Body of pancreas (tissue), 4 donors: ENCODE measurements at regions of chr5 and their contacts with region 1.

Region 1: GRCh38 chr5:16446993-16447392 is 18.6 kb downstream of the ZNF622 start:
- DNase-seq: no peak
- ATAC-seq: no peak
- H3K4me3 ChIP-seq: no peak overlapping the region
- H3K27ac ChIP-seq: no peak overlapping the region
- H3K4me1 ChIP-seq: no peaks in the 10 kb centered on the region
- H3K27me3 ChIP-seq: no peaks in the 10 kb centered on the region
- CTCF ChIP-seq: no peak
- POLR2A ChIP-seq: no peak

Region 2: GRCh38 chr5:16178745-16179372 is 268.1 kb before region 1 on chr5:
- intact Hi-C with region 1: loop called (anchors 10 kb)
- DNase-seq: peak; percentile 84 to 91 (median 86)
- ATAC-seq: peak; percentile 92
- H3K4me3 ChIP-seq: no peak overlapping the region
- H3K27ac ChIP-seq: peak overlapping the region in 1 of 4 donors; percentile 49
- H3K4me1 ChIP-seq: peaks cover 10% of the 10 kb centered on the region
- H3K27me3 ChIP-seq: peaks cover 0 to 5% of the 10 kb centered on the region in 2 donors
- CTCF ChIP-seq: peak in 1 of 7 experiments; percentile 7
- POLR2A ChIP-seq: no peak

Region 3: DNA sequence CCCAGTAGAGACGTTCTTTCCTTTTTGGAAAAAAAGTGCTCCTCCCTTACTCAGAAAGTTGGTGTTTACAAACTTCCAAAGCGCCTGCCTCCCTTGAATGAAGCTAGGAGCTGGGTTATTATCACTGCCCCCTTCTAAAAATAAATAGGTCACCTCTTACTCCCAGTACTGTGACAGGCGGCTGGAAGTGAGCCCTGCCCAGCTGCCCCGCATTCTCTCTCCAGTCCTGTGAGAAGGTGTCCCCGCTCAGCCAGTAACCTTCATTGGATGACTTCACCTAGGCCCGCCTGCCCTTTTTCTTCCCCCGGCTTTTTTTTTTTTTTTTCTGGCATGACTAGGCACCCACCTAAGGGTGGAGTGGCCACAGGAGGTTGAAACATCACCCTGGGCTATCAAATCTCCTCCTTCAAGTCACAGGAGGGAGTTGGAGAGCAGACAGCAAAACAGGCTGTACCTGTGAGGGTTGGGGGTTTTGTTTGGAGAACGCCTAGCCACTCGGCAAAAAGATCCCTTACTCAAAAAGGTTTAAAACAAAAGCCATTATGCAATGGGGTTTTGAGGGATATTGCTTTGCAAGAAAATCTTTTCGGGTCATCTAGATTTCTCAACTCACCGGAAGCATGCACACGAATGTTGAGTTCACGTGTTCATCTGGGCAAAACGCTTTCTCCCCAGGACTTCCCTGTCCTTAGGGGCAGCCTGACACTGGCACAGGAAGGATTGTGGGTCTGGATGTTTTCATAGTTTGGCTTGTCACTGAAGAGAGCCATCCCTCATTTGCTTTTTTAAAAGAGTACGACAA is 61.9 kb after region 1 on chr5:
- intact Hi-C with region 1: no loop called
- DNase-seq: peak; percentile 87 to 95 (median 92)
- ATAC-seq: peak; percentile 95
- H3K4me3 ChIP-seq: peak overlapping the region in 1 of 2 donors; percentile 13
- H3K27ac ChIP-seq: peak overlapping the region; percentile 77 to 94 (median 90)
- H3K4me1 ChIP-seq: peaks cover 46% of the 10 kb centered on the region
- H3K27me3 ChIP-seq: no peaks in the 10 kb centered on the region
- CTCF ChIP-seq: peak in 1 of 7 experiments; percentile 6
- POLR2A ChIP-seq: peak; percentile 35 to 85 (median 83)

Region 4: DNA sequence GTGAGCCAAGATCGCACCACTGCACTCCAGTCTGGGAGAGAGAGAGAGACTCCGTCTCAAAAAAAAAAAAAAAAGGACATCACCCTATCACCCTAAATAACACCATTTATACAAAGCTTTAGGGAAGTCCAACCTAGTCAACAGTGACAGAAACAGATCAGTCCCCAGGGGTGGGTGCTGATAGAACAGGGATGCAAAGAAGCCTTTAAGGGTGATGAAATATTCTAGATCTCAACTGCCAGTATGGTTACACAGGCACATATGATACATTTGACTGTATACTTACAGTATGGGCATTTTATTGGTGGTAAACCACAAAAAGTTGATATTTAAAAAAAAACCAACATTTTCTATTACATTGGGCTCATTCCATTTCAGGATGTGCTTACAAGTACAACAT is 165.0 kb after region 1 on chr5:
- intact Hi-C with region 1: no loop called
- DNase-seq: no peak
- ATAC-seq: no peak
- H3K4me3 ChIP-seq: no peak overlapping the region
- H3K27ac ChIP-seq: no peak overlapping the region
- H3K4me1 ChIP-seq: peaks cover 6% of the 10 kb centered on the region
- H3K27me3 ChIP-seq: no peaks in the 10 kb centered on the region
- CTCF ChIP-seq: no peak
- POLR2A ChIP-seq: no peak

Region 5: GRCh38 chr5:16934123-16934522 is 487.1 kb after region 1 on chr5:
- intact Hi-C with region 1: no loop called
- DNase-seq: peak; percentile 62 to 78 (median 67)
- ATAC-seq: peak; percentile 25
- H3K4me3 ChIP-seq: peak overlapping the region in 1 of 2 donors; percentile 96
- H3K27ac ChIP-seq: peak overlapping the region in 2 of 4 donors; percentile 91 to 99
- H3K4me1 ChIP-seq: peaks cover 46% of the 10 kb centered on the region
- H3K27me3 ChIP-seq: no peaks in the 10 kb centered on the region
- CTCF ChIP-seq: peak; percentile 68 to 88 (median 80)
- POLR2A ChIP-seq: no peak